ENCODE measurements at regions of chr14 and their contacts with region 1.

Region 1: GRCh38 chr14:61730756-61731373 is 31.4 kb upstream of the SNAPC1 start:
- DNase-seq: no peak
- H3K4me3 ChIP-seq: no peak overlapping the region
- CTCF ChIP-seq: no peak
- POLR2A ChIP-seq: no peak

Region 2: DNA sequence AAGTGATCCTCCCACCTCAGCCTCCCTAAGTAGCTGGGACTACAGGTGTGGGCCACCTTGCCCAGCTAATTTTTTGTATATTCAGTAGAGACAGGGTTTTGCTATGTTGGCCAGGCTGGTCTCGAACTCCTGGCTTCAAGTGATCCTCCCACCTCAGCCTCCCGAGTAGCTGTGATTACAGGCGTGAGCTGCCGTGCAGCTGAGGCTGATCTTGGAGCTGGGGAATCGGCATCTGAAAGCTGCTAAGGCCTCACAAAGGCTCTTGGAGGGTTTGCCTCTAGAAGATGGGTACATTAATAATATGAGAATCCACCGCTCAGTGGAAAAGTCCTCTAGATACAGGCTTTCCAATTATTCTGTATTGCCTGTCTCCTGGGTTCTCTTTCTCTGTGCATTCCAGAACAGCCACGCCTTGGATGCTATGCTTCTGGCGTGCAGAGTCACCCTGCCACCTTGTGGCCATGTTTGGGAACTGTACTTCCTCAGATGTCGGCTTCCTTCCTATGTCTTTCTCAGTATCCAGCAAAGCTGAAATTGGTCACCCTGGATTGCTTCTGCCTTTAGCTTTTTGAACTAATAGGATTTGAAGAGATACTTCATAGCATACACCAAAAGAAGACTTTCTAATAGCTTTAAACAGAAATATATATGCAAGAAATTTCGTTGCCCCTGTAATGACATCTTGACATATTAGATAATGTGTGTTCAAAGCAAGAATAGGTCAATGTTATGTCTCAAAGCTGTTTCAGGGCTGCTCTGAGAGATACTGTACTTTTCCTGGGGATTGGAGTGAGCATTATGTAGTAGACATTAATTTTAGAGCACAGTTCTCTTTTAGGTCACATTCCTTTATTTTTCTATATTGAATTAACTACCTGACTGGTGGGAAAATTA is 106.7 kb after region 1 on chr14:
- intact Hi-C with region 1: loop called (anchors 10 kb)
- DNase-seq: peak; percentile 81 to 94
- H3K4me3 ChIP-seq: no peak overlapping the region
- CTCF ChIP-seq: peak in 1 of 3 donors; percentile 58
- POLR2A ChIP-seq: no peak